ENCODE measurements at regions of chr19 and their contacts with region 1.

Region 1: GRCh38 chr19:48853483-48853882 is 14.9 kb downstream of the PLEKHA4 start:
- DNase-seq: no peak
- H3K4me3 ChIP-seq: no peak overlapping the region
- H3K27ac ChIP-seq: no peak overlapping the region
- H3K4me1 ChIP-seq: no peaks in the 10 kb centered on the region
- H3K27me3 ChIP-seq: no peaks in the 10 kb centered on the region
- CTCF ChIP-seq: no peak

Region 2: GRCh38 chr19:48683349-48683748 is 170.1 kb before region 1 on chr19:
- dilution Hi-C with region 1: no loop called
- DNase-seq: no peak
- H3K4me3 ChIP-seq: no peak overlapping the region
- H3K27ac ChIP-seq: no peak overlapping the region
- H3K4me1 ChIP-seq: no peaks in the 10 kb centered on the region
- H3K27me3 ChIP-seq: no peaks in the 10 kb centered on the region
- CTCF ChIP-seq: no peak

Region 3: GRCh38 chr19:48795055-48795684 is 58.3 kb before region 1 on chr19:
- dilution Hi-C with region 1: loop called (anchors 5 kb)
- DNase-seq: peak; percentile 56
- H3K4me3 ChIP-seq: peak overlapping the region; percentile 24 to 65 (median 54)
- H3K27ac ChIP-seq: peak overlapping the region; percentile 76
- H3K4me1 ChIP-seq: peaks cover 15% of the 10 kb centered on the region
- H3K27me3 ChIP-seq: no peaks in the 10 kb centered on the region
- CTCF ChIP-seq: peak; percentile 78 to 98 (median 94)